A673 (cell line): ENCODE measurements at regions of chr16 and their contacts with region 1.

Region 1: GRCh38 chr16:31298967-31299366 is 39.2 kb downstream of the ITGAM start:
- DNase-seq: no peak
- H3K4me3 ChIP-seq: no peak overlapping the region
- H3K27ac ChIP-seq: no peak overlapping the region
- H3K4me1 ChIP-seq: no peaks in the 10 kb centered on the region
- H3K27me3 ChIP-seq: peaks cover 14% of the 10 kb centered on the region
- CTCF ChIP-seq: peak; percentile 32; the same call in 1 of the 2 replicates

Region 2: DNA sequence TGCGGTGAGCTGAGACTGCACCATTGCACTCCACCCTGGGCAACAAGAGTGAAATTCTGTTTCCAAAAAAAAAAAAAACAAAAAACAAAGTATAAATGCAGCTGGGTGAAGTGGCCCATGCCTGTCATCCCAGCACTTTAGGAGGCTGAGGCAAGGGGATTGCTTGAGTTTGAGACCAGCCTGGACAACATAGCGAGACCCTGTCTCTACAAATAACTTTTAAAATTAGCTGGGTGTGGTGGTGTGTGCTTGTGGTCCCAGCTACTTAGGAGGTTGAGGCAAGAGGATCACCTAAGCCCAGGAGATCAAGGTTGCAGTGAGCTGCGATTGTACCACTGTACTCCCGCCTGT is 275.7 kb before region 1 on chr16:
- CTCF ChIA-PET with region 1: interaction called, 13 read pairs
- POLR2A ChIA-PET with region 1: no interaction called
- intact Hi-C with region 1: no loop called
- DNase-seq: no peak
- H3K4me3 ChIP-seq: no peak overlapping the region
- H3K27ac ChIP-seq: no peak overlapping the region
- H3K4me1 ChIP-seq: no peaks in the 10 kb centered on the region
- H3K27me3 ChIP-seq: no peaks in the 10 kb centered on the region
- CTCF ChIP-seq: no peak

Region 3: GRCh38 chr16:31344712-31345111 is 45.7 kb after region 1 on chr16:
- CTCF ChIA-PET with region 1: no interaction called
- POLR2A ChIA-PET with region 1: no interaction called
- intact Hi-C with region 1: no loop called
- DNase-seq: no peak
- H3K4me3 ChIP-seq: no peak overlapping the region
- H3K27ac ChIP-seq: no peak overlapping the region
- H3K4me1 ChIP-seq: no peaks in the 10 kb centered on the region
- H3K27me3 ChIP-seq: no peaks in the 10 kb centered on the region
- CTCF ChIP-seq: no peak

Region 4: DNA sequence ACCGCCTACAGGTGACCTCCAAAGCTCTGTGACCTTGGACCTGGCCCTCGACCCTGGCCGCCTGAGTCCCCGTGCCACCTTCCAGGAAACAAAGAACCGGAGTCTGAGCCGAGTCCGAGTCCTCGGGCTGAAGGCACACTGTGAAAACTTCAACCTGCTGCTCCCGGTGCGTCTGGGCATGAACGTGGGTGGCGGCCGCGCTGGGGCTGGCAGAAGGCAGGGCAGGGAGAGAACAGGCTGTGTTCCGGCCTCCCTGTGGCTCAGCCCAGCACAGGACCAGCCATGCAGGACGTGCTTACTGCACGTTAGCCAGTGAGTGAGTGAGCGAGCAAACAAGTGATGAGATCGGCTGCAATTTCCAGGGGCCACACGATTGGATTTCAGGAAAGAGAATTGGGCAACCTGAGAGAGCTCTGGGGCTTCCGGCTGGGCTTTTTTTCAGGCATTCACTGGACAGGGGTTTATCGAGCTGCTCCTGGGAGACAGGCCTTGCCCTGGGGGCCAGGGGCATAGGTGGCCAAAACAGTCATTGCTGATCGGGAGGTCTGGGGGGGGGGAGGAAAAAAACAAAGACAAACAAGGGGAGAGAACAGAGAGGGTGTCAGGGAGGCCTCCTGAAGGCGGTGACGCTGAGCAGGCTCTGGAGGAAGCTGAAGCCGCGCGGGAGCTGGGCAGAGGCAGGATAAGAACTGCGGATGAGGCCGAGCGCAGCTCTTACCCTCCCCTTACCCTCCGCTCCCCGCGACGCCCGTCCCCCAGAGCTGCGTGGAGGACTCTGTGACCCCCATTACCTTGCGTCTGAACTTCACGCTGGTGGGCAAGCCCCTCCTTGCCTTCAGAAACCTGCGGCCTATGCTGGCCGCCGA is 72.9 kb after region 1 on chr16:
- CTCF ChIA-PET with region 1: no interaction called
- POLR2A ChIA-PET with region 1: no interaction called
- intact Hi-C with region 1: loop called (anchors 10 kb)
- DNase-seq: no peak
- H3K4me3 ChIP-seq: no peak overlapping the region
- H3K27ac ChIP-seq: no peak overlapping the region
- H3K4me1 ChIP-seq: no peaks in the 10 kb centered on the region
- H3K27me3 ChIP-seq: peaks cover 6% of the 10 kb centered on the region
- CTCF ChIP-seq: no peak

Region 5: DNA sequence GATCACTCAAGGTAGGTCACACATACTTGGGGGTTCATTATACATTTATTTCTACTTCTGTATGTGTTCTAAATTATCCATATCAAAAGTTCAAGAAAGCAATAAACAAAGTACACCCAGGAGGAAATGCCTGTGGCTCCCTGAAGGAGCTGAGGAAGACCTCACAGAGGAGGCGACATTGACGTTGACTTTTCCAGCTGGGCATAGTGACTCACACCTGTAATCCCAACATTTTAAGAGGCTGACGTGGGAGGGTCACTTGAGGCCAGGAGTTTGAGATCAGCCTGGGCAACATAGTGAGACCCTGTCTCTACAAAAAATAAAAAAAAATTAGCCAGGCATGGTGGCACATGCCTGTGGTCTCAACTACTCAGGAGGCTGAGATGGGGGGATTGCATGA is 110.5 kb after region 1 on chr16:
- CTCF ChIA-PET with region 1: no interaction called
- POLR2A ChIA-PET with region 1: no interaction called
- intact Hi-C with region 1: no loop called
- DNase-seq: no peak
- H3K4me3 ChIP-seq: no peak overlapping the region
- H3K27ac ChIP-seq: no peak overlapping the region
- H3K4me1 ChIP-seq: no peaks in the 10 kb centered on the region
- H3K27me3 ChIP-seq: no peaks in the 10 kb centered on the region
- CTCF ChIP-seq: no peak